GM12878 (cell line): ENCODE measurements at regions of chr16 and their contacts with region 1.

Region 1: GRCh38 chr16:68147438-68147837 is 62.3 kb downstream of the NFATC3 start:
- DNase-seq: no peak
- ATAC-seq: no peak
- H3K4me3 ChIP-seq: no peak overlapping the region
- H3K27ac ChIP-seq: no peak overlapping the region
- H3K4me1 ChIP-seq: no peaks in the 10 kb centered on the region
- H3K27me3 ChIP-seq: no peaks in the 10 kb centered on the region
- CTCF ChIP-seq: no peak
- EP300 ChIP-seq: no peak
- POLR2A ChIP-seq: no peak
- RAD21 ChIP-seq: no peak

Region 2: DNA sequence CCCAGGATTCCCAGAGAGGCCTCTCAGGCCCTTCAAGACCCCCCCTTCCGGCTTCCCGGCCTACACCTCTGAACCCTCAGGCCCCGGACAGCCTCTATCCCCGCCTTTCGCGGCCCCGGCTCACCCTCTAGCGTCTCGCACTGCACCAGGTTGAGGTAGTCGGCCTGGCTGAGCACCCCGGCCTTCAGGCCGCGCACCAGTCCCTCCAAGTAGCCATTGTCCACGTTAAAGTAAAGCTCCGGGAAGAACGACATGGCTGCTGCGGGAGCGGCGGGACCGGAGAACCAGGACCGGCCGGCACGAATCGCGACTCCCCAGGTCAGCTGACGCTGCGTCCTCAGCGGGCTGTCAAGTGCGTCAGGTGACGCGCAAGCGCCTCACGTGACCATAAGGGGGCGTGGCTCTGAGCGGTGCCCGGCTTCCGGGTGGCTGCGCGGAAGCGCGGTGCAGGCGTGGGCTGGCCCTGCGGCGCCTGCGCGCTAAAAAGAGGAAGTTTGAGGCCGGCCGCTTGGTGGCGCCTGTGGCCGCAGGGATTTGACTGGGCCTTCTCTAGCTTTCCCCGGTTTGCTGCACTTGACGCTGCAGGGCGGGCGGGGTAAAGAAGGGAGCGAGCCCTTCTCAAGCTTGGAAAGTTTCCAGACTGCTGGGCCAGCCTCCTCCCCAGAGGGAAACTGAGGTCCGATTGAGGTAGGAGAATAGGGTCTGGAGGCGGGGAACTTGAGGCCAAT is 666.4 kb before region 1 on chr16 and contains the start of gene ATP6V0D1:
- CTCF ChIA-PET with region 1: no interaction called
- POLR2A ChIA-PET with region 1: no interaction called
- RAD21 ChIA-PET with region 1: no interaction called
- SMC1A ChIA-PET with region 1: no interaction called
- in situ Hi-C with region 1: no loop called
- intact Hi-C with region 1: no loop called
- DNase-seq: peak; percentile 94
- ATAC-seq: peak; percentile 92
- H3K4me3 ChIP-seq: peak within 1 kb of the TSS; percentile 87
- H3K27ac ChIP-seq: peak within 1 kb of the TSS; percentile 86
- H3K4me1 ChIP-seq: peaks cover 19% of the 10 kb centered on the region
- H3K27me3 ChIP-seq: no peaks in the 10 kb centered on the region
- CTCF ChIP-seq: peak; percentile 82 to 97 (median 93); a peak in 5 of 6 replicates
- EP300 ChIP-seq: 0 out of 4 replicates have a peak, but pooled peaks of 1 of the 2 experiments have one; percentile 13
- POLR2A ChIP-seq: peak; percentile 86
- RAD21 ChIP-seq: peak; percentile 81
- polyA plus RNA-seq, gene ATP6V0D1: 28.1 to 30.2 TPM

Region 3: GRCh38 chr16:67833035-67833417 is 314.4 kb before region 1 on chr16:
- CTCF ChIA-PET with region 1: no interaction called
- POLR2A ChIA-PET with region 1: no interaction called
- RAD21 ChIA-PET with region 1: no interaction called
- SMC1A ChIA-PET with region 1: no interaction called
- in situ Hi-C with region 1: no loop called
- intact Hi-C with region 1: no loop called
- DNase-seq: no peak
- ATAC-seq: peak; percentile 27
- H3K4me3 ChIP-seq: peak overlapping the region; percentile 91
- H3K27ac ChIP-seq: peak overlapping the region; percentile 54
- H3K4me1 ChIP-seq: peaks cover 7% of the 10 kb centered on the region
- H3K27me3 ChIP-seq: no peaks in the 10 kb centered on the region
- CTCF ChIP-seq: no peak
- EP300 ChIP-seq: no peak
- POLR2A ChIP-seq: no peak
- RAD21 ChIP-seq: no peak

Region 4: DNA sequence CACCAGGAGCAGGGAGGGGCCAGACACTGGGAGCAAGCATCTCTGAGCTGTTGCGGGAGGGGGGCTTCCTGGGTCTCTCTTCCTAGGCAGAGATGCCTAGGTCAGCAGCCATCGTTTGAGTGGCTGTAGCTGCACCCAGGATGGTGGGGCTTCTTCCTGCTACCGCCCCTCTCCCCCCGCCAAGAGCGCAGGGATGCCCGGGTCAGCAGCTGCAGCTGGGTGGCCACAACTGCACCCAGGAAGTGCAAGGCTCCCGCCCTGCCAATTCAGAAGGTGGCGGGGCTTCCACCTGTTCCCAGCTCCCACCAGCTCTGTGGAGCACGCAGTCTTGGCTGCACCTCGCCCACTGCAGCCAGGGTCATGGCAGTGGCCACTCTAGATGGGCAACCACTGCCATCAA is 40.7 kb after region 1 on chr16:
- CTCF ChIA-PET with region 1: no interaction called
- POLR2A ChIA-PET with region 1: no interaction called
- RAD21 ChIA-PET with region 1: no interaction called
- SMC1A ChIA-PET with region 1: no interaction called
- in situ Hi-C with region 1: no loop called
- intact Hi-C with region 1: no loop called
- DNase-seq: no peak
- ATAC-seq: no peak
- H3K4me3 ChIP-seq: no peak overlapping the region
- H3K27ac ChIP-seq: no peak overlapping the region
- H3K4me1 ChIP-seq: no peaks in the 10 kb centered on the region
- H3K27me3 ChIP-seq: no peaks in the 10 kb centered on the region
- CTCF ChIP-seq: no peak
- EP300 ChIP-seq: no peak
- POLR2A ChIP-seq: no peak
- RAD21 ChIP-seq: no peak

Region 5: GRCh38 chr16:68310761-68311511 is 163.5 kb after region 1 on chr16 and contains the starts of genes PRMT7 and SLC7A6OS:
- CTCF ChIA-PET with region 1: no interaction called
- POLR2A ChIA-PET with region 1: interaction called, 10 read pairs
- RAD21 ChIA-PET with region 1: no interaction called
- SMC1A ChIA-PET with region 1: no interaction called
- in situ Hi-C with region 1: no loop called
- intact Hi-C with region 1: no loop called
- DNase-seq: peak; percentile 65
- ATAC-seq: peak; percentile 99
- H3K4me3 ChIP-seq: peak within 1 kb of the TSS; percentile 95
- H3K27ac ChIP-seq: peak within 1 kb of the TSS; percentile 79
- H3K4me1 ChIP-seq: 0 out of 2 replicates have a peak, but pooled peaks cover 3% of the 10 kb centered on the region
- H3K27me3 ChIP-seq: no peaks in the 10 kb centered on the region
- CTCF ChIP-seq: no peak
- EP300 ChIP-seq: peak in 1 of 2 experiments; percentile 27; a peak in 1 of 4 replicates
- POLR2A ChIP-seq: peak; percentile 98
- RAD21 ChIP-seq: 0 out of 2 replicates have a peak, but pooled peaks have one; percentile 8
- polyA plus RNA-seq, gene PRMT7: 5.1 to 5.6 TPM
- polyA plus RNA-seq, gene SLC7A6OS: 2.9 to 6.4 TPM

Region 6: GRCh38 chr16:69554495-69554894 is 1407.1 kb after region 1 on chr16:
- CTCF ChIA-PET with region 1: no interaction called
- POLR2A ChIA-PET with region 1: no interaction called
- RAD21 ChIA-PET with region 1: no interaction called
- SMC1A ChIA-PET with region 1: no interaction called
- in situ Hi-C with region 1: no loop called
- intact Hi-C with region 1: no loop called
- DNase-seq: no peak
- ATAC-seq: peak; percentile 46
- H3K4me3 ChIP-seq: no peak overlapping the region
- H3K27ac ChIP-seq: no peak overlapping the region
- H3K4me1 ChIP-seq: peaks cover 5% of the 10 kb centered on the region
- H3K27me3 ChIP-seq: no peaks in the 10 kb centered on the region
- CTCF ChIP-seq: no peak
- EP300 ChIP-seq: no peak
- POLR2A ChIP-seq: no peak
- RAD21 ChIP-seq: no peak